ENCODE measurements at regions of chr2 and their contacts with region 1.

Region 1: GRCh38 chr2:24613154-24613814 is 122.2 kb downstream of the NCOA1 start:
- DNase-seq: peak; percentile 45
- H3K4me3 ChIP-seq: no peak overlapping the region
- H3K27ac ChIP-seq: no peak overlapping the region
- H3K4me1 ChIP-seq: no peaks in the 10 kb centered on the region
- H3K27me3 ChIP-seq: no peaks in the 10 kb centered on the region
- CTCF ChIP-seq: peak; percentile 49 to 55
- POLR2A ChIP-seq: no peak

Region 2: GRCh38 chr2:24049485-24050021 is 563.7 kb before region 1 on chr2 and contains the start of gene FKBP1B:
- CTCF ChIA-PET with region 1: no interaction called
- POLR2A ChIA-PET with region 1: no interaction called
- dilution Hi-C with region 1: no loop called
- intact Hi-C with region 1: no loop called
- DNase-seq: peak; percentile 47
- H3K4me3 ChIP-seq: peak within 1 kb of the TSS; percentile 75 to 93 (median 77)
- H3K27ac ChIP-seq: no peak within 1 kb of the TSS
- H3K4me1 ChIP-seq: peaks cover 23% of the 10 kb centered on the region
- H3K27me3 ChIP-seq: no peaks in the 10 kb centered on the region
- CTCF ChIP-seq: no peak
- POLR2A ChIP-seq: peak; percentile 64
- total RNA-seq, gene FKBP1B: 12.9 and 16.8 TPM in 2 replicates

Region 3: DNA sequence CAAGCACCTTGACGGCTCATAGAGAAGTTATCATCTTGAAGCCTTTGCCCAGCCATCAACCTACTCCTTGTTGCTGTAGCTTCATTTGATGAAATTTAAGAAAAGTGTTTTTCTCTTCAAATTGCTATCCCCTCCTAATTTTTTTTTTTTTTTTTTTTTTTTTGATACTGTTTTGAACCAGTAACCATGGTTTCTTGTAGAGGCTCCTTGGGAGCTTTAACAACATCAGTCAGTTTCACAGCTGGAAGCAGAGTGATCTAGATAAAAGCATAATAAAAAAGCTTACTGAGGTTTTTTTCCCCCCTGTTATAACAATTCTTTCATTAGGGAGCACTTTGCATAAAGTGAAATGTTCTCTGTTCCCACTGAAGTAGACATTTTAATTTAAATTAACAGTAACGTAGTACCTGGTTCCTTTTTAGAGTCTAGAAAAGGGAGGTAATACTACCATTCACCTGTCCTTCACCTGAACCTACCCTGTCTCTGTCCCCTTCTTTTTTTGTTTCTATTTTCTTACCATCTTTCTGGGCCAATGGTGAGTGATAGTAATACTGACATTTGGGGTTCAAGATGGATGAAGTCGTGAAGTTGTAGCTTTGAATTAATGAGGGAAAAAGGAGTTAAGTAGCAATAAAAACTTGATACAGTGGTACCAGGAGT is 20.7 kb before region 1 on chr2:
- CTCF ChIA-PET with region 1: interaction called, 12 read pairs
- POLR2A ChIA-PET with region 1: no interaction called
- dilution Hi-C with region 1: no loop called
- intact Hi-C with region 1: no loop called
- DNase-seq: no peak
- H3K4me3 ChIP-seq: no peak overlapping the region
- H3K27ac ChIP-seq: no peak overlapping the region
- H3K4me1 ChIP-seq: no peaks in the 10 kb centered on the region
- H3K27me3 ChIP-seq: no peaks in the 10 kb centered on the region
- CTCF ChIP-seq: no peak
- POLR2A ChIP-seq: no peak

Region 4: DNA sequence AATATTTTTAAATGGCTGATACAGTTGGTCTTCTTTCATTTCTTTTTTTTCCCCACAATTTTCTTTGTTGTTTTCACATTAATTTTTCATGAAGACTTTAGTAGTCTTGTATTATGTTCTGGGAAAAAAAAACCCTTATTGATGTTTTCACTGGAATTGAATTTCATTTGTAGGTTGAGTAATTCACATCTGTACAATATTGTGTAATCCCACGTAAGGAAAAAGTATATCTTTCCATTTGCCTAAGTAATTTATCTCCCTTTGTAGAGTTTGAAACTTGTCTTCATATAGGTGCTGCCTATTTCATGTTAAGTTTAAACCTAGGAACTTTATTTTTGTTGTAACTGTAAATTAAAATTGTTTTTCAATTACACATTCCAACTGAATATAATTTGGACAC is 356.5 kb after region 1 on chr2:
- CTCF ChIA-PET with region 1: no interaction called
- POLR2A ChIA-PET with region 1: no interaction called
- dilution Hi-C with region 1: no loop called
- intact Hi-C with region 1: no loop called
- DNase-seq: no peak
- H3K4me3 ChIP-seq: no peak overlapping the region
- H3K27ac ChIP-seq: no peak overlapping the region
- H3K4me1 ChIP-seq: peaks cover 10% of the 10 kb centered on the region
- H3K27me3 ChIP-seq: no peaks in the 10 kb centered on the region
- CTCF ChIP-seq: no peak
- POLR2A ChIP-seq: no peak